Panc1 (cell line): ENCODE measurements at regions of chr4 and their contacts with region 1.

Region 1: GRCh38 chr4:155603360-155603891 is 63.2 kb upstream of the GUCY1A1 start:
- DNase-seq: no peak
- ATAC-seq: no peak
- H3K4me3 ChIP-seq: no peak overlapping the region
- H3K27ac ChIP-seq: no peak overlapping the region
- H3K4me1 ChIP-seq: no peaks in the 10 kb centered on the region
- H3K27me3 ChIP-seq: no peaks in the 10 kb centered on the region
- CTCF ChIP-seq: no peak

Region 2: DNA sequence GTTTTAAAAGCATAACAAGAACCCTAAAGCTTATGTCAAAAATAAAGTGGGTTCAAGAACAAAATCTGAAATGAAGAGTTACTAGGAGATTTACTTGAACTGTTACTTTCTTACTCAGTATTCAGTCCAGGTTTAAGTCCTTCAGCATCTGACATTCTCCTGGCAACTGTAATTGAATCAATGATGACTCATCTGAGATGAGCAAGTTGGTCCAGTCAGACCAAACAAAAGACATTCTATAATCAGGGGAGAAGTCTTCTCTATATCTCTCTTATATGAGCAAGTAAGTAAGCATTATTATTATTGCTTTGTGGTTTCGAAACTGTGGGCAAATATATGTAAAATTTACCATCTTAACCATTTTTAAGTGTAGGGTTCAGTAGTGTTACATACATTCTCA is 261.3 kb before region 1 on chr4:
- CTCF ChIA-PET with region 1: no interaction called
- POLR2A ChIA-PET with region 1: no interaction called
- in situ Hi-C with region 1: no loop called
- intact Hi-C with region 1: no loop called
- DNase-seq: peak; percentile 5
- ATAC-seq: no peak
- H3K4me3 ChIP-seq: no peak overlapping the region
- H3K27ac ChIP-seq: no peak overlapping the region
- H3K4me1 ChIP-seq: no peaks in the 10 kb centered on the region
- H3K27me3 ChIP-seq: no peaks in the 10 kb centered on the region
- CTCF ChIP-seq: no peak

Region 3: DNA sequence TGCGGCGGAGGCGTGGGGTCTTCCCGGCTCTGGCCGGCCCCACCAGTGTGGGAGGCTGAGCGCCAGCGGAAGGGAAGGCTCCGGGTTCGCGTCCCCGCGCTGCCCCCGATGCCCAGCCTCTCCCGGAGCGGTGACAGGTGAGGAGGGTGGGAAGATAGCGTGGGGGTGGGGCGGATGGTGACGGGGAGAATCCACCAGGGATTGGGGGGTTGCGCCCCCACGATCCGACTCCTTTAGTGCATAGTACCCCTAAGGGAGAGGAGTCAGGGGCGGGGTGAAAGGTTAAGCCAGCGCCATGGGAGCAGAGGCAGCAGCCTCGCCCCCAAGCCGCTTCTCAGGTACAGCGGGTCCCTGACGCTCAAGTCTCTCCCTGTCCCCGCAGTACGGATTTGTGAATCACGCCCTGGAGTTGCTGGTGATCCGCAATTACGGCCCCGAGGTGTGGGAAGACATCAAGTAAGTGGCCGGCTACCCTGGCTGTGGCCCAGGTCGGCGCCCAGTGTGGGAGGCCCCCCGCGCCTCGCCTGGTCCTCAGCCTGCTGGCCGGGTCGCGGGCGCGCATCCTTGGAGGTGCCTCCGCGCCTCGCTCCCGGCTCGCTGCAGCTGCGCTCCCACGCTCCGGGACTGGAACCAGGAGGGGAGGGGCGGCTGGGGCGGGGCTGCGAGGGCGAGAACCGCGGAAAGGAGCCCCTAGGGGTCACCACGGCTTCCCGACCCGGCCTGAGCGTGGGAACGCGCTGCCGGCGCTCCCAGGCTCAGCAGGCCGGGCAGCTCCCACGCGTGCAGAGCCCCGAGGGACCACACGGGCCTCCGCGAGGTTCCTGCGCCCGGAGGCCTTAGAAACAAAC is 156.2 kb after region 1 on chr4:
- CTCF ChIA-PET with region 1: no interaction called
- POLR2A ChIA-PET with region 1: interaction called, 16 read pairs
- in situ Hi-C with region 1: no loop called
- intact Hi-C with region 1: no loop called
- DNase-seq: no peak
- ATAC-seq: peak; percentile 60; the same call in 1 of the 2 replicates
- H3K4me3 ChIP-seq: peak overlapping the region; percentile 43 to 55
- H3K27ac ChIP-seq: no peak overlapping the region
- H3K4me1 ChIP-seq: no peaks in the 10 kb centered on the region
- H3K27me3 ChIP-seq: no peaks in the 10 kb centered on the region
- CTCF ChIP-seq: no peak